ENCODE measurements at regions of chr12 and their contacts with region 1.

Region 1: GRCh38 chr12:116582610-116583009 is 23.4 kb downstream of the MAP1LC3B2 start:
- DNase-seq: no peak

Region 2: DNA sequence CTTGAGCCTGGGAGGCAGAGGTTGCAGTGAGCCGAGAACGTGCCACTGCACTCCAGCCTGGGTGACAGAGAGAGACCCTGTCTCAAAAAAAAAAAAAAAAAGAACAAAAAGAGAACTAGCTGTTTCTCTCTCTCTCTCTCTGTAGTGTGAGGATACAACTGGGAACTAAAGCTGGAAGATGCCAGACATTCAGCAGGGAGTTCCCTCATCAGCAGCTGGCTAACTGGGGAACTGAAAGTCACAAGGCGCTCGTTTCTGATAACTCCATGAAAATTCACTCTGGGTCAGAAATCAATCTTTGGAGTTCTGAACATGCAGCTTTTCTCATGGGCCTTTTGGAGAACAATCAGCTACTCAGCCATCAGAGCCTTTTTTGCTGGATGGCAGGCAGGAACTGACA is 66.9 kb before region 1 on chr12:
- in situ Hi-C with region 1: loop called (anchors 10 kb)
- DNase-seq: no peak